PC-3 (cell line): ENCODE measurements at regions of chr18 and their contacts with region 1.

Region 1: DNA sequence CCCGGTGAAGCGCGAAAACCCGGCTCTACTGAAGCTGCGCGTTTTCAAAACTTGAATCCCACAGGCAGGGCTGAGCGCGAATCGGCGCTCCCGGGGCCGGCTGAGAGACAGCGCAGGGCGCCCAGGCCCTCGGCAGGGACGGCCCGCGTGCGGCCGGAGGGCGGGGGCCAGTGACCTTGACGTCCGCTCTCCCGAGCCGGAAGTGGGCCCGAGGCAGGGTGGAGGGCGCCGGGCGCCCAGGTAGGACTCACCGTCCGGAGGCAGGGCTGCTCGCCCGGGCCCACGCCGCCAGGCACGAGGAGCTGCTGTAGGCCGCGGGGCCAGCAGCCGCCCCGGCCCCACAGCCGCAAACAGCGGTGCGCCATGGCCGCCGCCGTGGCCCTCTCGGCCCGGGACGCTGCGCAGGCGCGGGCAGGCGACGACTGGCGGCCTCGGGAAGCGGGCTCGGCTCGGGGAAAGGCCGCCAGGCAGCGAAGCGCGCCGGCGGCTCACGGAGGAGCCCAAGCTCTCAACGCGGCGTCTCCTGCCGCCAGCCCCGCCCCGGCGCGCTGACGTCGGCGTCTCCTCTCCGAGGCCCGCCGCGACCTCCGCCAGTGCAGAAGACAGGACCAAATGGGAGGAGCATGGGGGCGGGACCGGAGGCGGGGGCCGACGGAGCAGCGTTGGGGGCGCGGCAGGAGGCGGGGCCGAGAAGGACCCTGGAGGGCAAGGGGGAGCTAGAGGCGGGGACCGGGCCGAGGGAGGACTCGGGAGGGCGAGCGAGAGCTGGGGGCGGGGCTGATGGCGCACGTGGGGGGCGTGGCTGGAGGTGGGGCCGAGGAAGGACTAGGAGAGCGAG is at the start of gene AFG3L2:
- DNase-seq: peak; percentile 98
- ATAC-seq: peak; percentile 84
- H3K4me3 ChIP-seq: peak within 1 kb of the TSS; percentile 84
- H3K27ac ChIP-seq: peak within 1 kb of the TSS; percentile 94
- H3K4me1 ChIP-seq: peaks cover 29% of the 10 kb centered on the region
- H3K27me3 ChIP-seq: no peaks in the 10 kb centered on the region
- CTCF ChIP-seq: no peak
- total RNA-seq, gene AFG3L2: 79.3 and 95.7 TPM in 2 replicates

Region 2: DNA sequence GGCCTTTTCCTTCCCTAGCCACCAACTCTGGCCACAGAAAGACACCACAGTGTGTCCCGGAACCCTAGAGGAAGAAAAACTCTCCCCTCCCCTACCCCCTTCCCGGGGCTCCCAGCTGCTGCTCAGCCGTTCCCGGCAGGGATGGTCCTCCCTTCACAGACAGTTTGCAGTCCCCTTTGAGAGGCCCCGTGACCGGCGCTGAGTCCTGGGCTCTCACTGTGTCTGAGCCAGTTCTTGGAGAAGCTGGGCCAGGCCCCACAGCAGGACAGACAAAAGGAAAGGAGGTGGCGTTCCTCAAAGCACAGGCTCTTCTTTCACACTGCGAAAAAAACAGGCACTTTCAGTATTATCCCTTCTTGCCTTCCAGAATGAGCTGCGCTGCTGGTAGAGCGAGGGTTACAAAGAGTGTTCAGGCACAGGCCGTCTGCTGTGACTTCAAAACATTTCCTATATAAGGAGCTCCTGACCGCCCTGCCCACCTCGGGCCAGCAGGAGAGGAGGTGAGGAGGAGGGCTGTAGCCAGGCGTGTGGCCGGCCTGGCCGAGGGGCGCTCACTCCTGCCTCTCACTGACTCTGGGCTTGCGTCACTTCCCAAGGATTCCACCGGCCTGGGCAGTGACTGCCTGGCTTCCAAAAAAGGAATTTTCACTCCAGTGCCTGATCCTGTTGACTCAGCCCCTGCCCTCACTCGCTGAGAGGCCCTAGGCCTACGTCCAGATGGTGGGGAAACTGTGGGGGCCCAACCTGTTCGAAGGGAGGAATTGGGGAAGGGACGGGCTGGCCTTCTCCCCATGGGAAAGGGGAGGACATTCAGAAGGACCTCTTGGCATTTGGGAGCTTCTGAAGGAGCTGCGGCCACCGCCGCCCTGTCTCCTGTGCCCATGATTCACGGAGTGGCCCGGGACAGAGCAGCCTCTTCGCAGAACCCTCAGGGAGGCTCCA is 97.9 kb before region 1 on chr18:
- CTCF ChIA-PET with region 1: no interaction called
- POLR2A ChIA-PET with region 1: interaction called, 12 read pairs
- intact Hi-C with region 1: loop called (anchors 2 kb)
- DNase-seq: no peak
- ATAC-seq: no peak
- H3K4me3 ChIP-seq: no peak overlapping the region
- H3K27ac ChIP-seq: no peak overlapping the region
- H3K4me1 ChIP-seq: peaks cover 24% of the 10 kb centered on the region
- H3K27me3 ChIP-seq: no peaks in the 10 kb centered on the region
- CTCF ChIP-seq: no peak

Region 3: DNA sequence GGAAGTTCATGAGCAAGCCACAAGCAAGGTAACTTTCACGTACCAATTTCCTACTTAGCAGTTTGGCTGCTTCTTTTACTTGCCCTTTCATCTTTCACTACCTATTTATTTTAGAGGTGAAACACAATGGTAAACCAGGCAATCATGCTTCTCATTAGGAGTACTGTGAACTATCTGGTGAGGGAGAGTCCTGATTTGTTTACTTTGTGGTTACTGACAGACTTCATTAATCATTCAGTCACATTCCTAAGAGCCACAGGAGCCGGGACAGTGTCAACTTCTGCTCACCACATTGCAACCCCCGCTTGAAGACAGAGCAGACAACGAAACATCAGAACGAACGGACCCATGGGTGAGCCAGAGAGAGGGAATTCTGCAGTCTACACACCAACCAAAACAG is 40.1 kb before region 1 on chr18:
- CTCF ChIA-PET with region 1: no interaction called
- POLR2A ChIA-PET with region 1: interaction called, 5 read pairs
- intact Hi-C with region 1: loop called (anchors 2 kb)
- DNase-seq: peak; percentile 90
- ATAC-seq: peak; percentile 98
- H3K4me3 ChIP-seq: no peak overlapping the region
- H3K27ac ChIP-seq: peak overlapping the region; percentile 2; the same call in 1 of the 2 replicates
- H3K4me1 ChIP-seq: peaks cover 21% of the 10 kb centered on the region
- H3K27me3 ChIP-seq: no peaks in the 10 kb centered on the region
- CTCF ChIP-seq: no peak

Region 4: DNA sequence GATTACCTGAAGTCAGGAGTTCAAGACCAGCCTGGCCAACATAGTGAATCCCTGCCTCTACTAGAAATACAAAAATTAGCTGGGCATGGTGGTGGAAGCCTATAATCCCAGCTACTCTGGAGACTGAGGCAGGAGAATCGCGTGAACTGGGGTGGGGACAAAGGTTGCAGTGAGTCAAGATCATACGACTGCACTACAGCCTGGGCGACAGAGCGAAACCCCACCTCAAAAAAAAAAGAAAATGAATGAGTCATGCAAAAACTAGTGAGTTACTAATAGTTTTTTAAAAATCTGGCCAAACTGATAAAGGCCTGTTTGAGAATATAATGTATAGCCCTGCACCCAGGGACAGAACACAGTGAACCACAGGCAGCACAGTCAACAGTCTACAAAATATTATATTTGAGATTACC is 17.4 kb before region 1 on chr18:
- CTCF ChIA-PET with region 1: interaction called, 3 read pairs
- POLR2A ChIA-PET with region 1: interaction called, 20 read pairs
- intact Hi-C with region 1: no loop called
- DNase-seq: no peak
- ATAC-seq: no peak
- H3K4me3 ChIP-seq: no peak overlapping the region
- H3K27ac ChIP-seq: no peak overlapping the region
- H3K4me1 ChIP-seq: no peaks in the 10 kb centered on the region
- H3K27me3 ChIP-seq: no peaks in the 10 kb centered on the region
- CTCF ChIP-seq: no peak

Region 5: GRCh38 chr18:12615748-12616147 is 238.8 kb after region 1 on chr18:
- CTCF ChIA-PET with region 1: no interaction called
- POLR2A ChIA-PET with region 1: interaction called, 13 read pairs
- intact Hi-C with region 1: no loop called
- DNase-seq: no peak
- ATAC-seq: no peak
- H3K4me3 ChIP-seq: no peak overlapping the region
- H3K27ac ChIP-seq: no peak overlapping the region
- H3K4me1 ChIP-seq: peaks cover 4% of the 10 kb centered on the region
- H3K27me3 ChIP-seq: no peaks in the 10 kb centered on the region
- CTCF ChIP-seq: no peak

Region 6: GRCh38 chr18:12947355-12948041 is 570.6 kb after region 1 on chr18 and contains the start of gene SEH1L:
- CTCF ChIA-PET with region 1: no interaction called
- POLR2A ChIA-PET with region 1: no interaction called
- intact Hi-C with region 1: loop called (anchors 5 kb)
- DNase-seq: peak; percentile 95
- ATAC-seq: peak; percentile 88
- H3K4me3 ChIP-seq: peak within 1 kb of the TSS; percentile 90
- H3K27ac ChIP-seq: peak within 1 kb of the TSS; percentile 96
- H3K4me1 ChIP-seq: peaks cover 23% of the 10 kb centered on the region
- H3K27me3 ChIP-seq: no peaks in the 10 kb centered on the region
- CTCF ChIP-seq: no peak
- total RNA-seq, gene SEH1L: 61.2 TPM in 2 replicates